GM10248 (cell line): ENCODE measurements at regions of chr1 and their contacts with region 1.

Region 1: DNA sequence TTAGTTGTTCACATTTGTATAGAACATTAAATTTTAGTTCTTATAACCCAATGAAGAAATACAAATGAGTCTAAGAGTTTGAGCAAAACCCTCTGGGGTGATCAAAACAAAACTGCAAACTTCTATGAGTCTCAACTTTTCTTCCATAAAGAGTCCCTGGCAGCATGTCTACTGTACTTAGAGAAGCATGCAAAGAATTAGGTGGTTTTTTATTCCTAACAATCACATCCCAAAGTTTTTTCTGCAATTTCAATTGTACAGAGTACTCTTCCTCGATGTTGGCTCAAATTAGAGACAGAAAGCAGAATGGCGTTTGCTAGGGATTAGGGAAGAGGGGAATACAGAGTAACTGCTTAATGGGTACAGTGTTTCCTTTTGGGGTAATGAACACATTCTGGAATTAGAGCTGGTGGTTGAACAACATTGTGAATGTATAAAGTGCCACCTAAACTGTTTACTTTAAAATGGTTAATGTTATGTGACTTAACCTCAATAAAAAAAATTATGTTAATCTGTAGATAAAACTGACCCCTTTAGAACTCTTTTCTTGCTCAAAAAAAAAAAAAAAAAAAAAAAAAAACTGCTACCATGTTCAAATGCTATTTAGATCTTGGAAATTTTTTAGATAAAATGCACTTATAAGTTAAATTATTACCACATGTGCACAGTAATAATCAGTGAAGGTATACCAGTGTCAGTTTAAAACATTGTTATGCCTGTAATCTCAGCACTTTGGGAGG is 4.8 kb downstream of the RC3H1 start:
- DNase-seq: no peak
- CTCF ChIP-seq: no peak

Region 2: GRCh38 chr1:174005032-174005431 is 12.4 kb before region 1 on chr1:
- CTCF ChIA-PET with region 1: interaction called, 17 read pairs
- POLR2A ChIA-PET with region 1: no interaction called
- DNase-seq: peak; percentile 67
- CTCF ChIP-seq: no peak